ENCODE measurements at regions of chr2 and their contacts with region 1.

Region 1: DNA sequence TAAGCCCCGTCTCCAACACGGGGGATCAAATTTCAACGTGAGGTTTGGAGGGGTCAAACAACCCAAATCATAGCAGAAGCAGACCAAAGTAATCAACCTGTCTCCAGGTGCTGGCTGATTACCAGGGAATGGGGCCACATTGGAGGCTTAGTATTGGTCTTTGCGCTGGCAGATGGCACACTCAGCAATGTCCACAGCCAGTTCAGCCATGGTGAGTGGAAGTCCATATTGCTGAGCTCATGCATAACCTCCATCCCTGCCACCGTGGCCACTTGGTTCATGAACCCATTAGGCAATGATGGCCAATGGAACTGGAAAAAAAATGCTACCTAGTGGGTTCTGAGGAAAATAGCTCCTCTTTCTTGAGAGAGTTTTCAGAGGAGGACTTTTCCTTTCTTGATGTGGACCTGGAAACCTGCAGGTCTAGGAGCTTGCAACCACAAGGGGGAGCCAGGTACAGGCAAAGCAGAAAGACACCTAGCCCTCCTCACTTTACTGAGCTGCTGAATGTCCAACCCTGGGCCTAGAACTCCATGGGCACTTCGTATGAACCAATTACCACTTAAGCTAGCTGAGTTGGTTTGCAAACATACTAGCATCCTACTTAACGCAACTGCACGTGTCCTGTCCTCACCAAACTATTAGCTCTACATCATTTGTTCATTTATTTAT is 128.0 kb upstream of the GYPC start:
- DNase-seq: peak; percentile 66 to 68
- H3K4me3 ChIP-seq: no peak overlapping the region
- H3K4me3 Mint-ChIP-seq: no peak overlapping the region
- H3K27ac Mint-ChIP-seq: no peak overlapping the region
- H3K4me1 ChIP-seq: no peaks in the 10 kb centered on the region
- H3K4me1 Mint-ChIP-seq: no peaks in the 10 kb centered on the region
- H3K27me3 ChIP-seq: no peaks in the 10 kb centered on the region
- H3K27me3 Mint-ChIP-seq: peaks cover 5% of the 10 kb centered on the region
- CTCF ChIP-seq: peak; percentile 58 to 76

Region 2: DNA sequence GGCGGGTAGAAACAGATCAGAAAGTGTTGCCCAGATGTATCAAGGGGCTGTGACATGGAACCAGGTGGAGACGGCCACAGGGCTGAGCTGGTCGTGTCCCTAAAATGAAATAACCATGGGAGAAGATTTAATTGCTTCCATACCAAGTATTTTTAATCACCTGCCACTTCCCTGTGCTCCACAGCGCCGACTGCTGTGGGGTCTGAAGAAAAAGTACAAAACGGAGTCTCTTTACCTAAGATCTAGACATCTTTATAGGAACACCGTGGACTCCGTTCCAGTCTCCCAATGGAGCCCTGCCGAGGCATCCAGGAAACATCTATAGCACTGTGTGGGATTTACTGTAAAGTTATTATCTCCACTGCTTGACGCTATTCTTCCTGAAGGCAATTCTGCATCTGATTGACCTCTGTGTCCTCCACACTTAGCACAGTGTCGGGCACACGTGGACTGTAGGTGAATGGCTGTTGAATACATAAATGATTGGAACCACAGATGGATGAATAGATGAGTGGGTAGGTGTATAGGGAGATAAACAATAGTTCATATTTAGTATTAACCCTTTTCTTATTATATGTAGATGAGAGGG is 106.4 kb after region 1 on chr2:
- CTCF ChIA-PET with region 1: no interaction called
- POLR2A ChIA-PET with region 1: no interaction called
- intact Hi-C with region 1: loop called (anchors 5 kb)
- DNase-seq: peak in 1 of 2 experiments; percentile 49
- H3K4me3 ChIP-seq: no peak overlapping the region
- H3K4me3 Mint-ChIP-seq: no peak overlapping the region
- H3K27ac Mint-ChIP-seq: no peak overlapping the region
- H3K4me1 ChIP-seq: no peaks in the 10 kb centered on the region
- H3K4me1 Mint-ChIP-seq: no peaks in the 10 kb centered on the region
- H3K27me3 ChIP-seq: no peaks in the 10 kb centered on the region
- H3K27me3 Mint-ChIP-seq: peaks cover 14% of the 10 kb centered on the region
- CTCF ChIP-seq: peak; percentile 78 to 87